Panc1 (cell line): ENCODE measurements at regions of chrX and their contacts with region 1.

Region 1: GRCh38 chrX:136953867-136954787 is 73.6 kb upstream of the RBMX start:
- DNase-seq: peak; percentile 27
- ATAC-seq: peak; percentile 97
- H3K4me3 ChIP-seq: no peak overlapping the region
- H3K27ac ChIP-seq: no peak overlapping the region
- H3K4me1 ChIP-seq: no peaks in the 10 kb centered on the region
- H3K27me3 ChIP-seq: no peaks in the 10 kb centered on the region
- CTCF ChIP-seq: peak; percentile 88

Region 2: GRCh38 chrX:137051978-137052642 is 98.0 kb after region 1 on chrX:
- CTCF ChIA-PET with region 1: interaction called, 4 read pairs
- POLR2A ChIA-PET with region 1: no interaction called
- in situ Hi-C with region 1: no loop called
- intact Hi-C with region 1: loop called (anchors 1 kb)
- DNase-seq: peak; percentile 8
- ATAC-seq: peak; percentile 97
- H3K4me3 ChIP-seq: peak overlapping the region; percentile 48 to 74
- H3K27ac ChIP-seq: no peak overlapping the region
- H3K4me1 ChIP-seq: peaks cover 5% of the 10 kb centered on the region
- H3K27me3 ChIP-seq: peaks cover 30% of the 10 kb centered on the region
- CTCF ChIP-seq: peak; percentile 97

Region 3: DNA sequence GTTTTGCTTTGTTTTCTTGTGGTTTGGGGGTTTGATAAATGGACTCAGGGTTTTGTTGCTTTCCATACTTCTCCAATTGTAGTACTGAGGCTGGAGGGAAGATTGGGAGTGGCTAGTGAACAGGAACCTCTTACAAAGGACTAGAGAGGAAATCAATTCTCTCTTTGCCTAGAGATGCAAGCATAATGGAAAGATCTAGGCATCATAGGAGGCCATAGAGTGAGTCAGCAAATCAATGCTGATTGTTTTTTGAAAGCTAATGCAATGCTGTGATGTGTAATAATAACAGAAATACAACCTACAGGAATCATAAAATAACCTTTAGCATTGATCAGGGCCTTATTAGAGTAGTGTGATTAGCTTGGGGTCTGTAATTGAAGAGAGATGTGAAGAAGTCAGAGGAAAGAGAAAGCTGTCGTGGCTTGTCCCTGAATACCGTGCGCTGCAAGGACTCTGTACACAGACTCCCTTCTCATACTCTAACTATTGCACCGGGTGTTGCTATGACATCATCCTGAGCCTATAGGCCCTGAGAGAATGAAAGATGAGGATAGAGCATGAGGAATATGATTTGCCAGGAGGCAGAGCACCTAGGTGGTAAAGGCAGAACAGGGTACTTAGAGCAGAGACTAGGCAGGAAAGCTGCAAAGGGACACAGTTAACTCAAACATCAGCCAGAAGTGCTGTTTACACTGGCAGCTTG is 108.9 kb after region 1 on chrX:
- CTCF ChIA-PET with region 1: no interaction called
- POLR2A ChIA-PET with region 1: no interaction called
- in situ Hi-C with region 1: no loop called
- intact Hi-C with region 1: no loop called
- DNase-seq: no peak
- ATAC-seq: no peak
- H3K4me3 ChIP-seq: no peak overlapping the region
- H3K27ac ChIP-seq: no peak overlapping the region
- H3K4me1 ChIP-seq: no peaks in the 10 kb centered on the region
- H3K27me3 ChIP-seq: no peaks in the 10 kb centered on the region
- CTCF ChIP-seq: no peak

Region 4: DNA sequence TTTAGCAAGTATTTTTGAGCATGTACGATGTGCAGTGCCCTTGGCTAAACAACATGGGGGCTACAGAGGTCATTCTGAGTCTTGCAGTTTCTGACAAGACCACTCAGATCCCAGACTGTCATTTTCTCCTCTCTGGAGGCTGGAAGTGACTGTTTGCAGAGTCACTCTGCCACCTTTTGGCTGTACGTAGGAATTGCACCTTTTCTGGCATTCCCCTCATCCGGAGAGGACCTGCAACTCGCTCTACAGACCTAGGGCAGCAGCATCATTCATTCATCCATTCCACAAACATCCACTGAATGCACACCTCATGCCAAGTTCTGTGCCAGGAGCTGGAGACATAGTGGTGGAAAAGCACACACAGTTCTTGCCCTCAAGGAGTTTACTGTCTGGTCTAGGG is 240.0 kb after region 1 on chrX:
- CTCF ChIA-PET with region 1: interaction called, 3 read pairs
- POLR2A ChIA-PET with region 1: no interaction called
- in situ Hi-C with region 1: no loop called
- intact Hi-C with region 1: loop called (anchors 1 kb)
- DNase-seq: peak; percentile 20
- ATAC-seq: peak; percentile 84; the same call in 1 of the 2 replicates
- H3K4me3 ChIP-seq: no peak overlapping the region
- H3K27ac ChIP-seq: no peak overlapping the region
- H3K4me1 ChIP-seq: no peaks in the 10 kb centered on the region
- H3K27me3 ChIP-seq: no peaks in the 10 kb centered on the region
- CTCF ChIP-seq: peak; percentile 76